ENCODE measurements at regions of chr16 and their contacts with region 1.

Region 1: GRCh38 chr16:58336332-58337089 is 41.7 kb upstream of the PRSS54 start:
- DNase-seq: peak; percentile 92
- ATAC-seq: peak; percentile 96
- H3K4me3 Mint-ChIP-seq: no peak overlapping the region
- H3K27ac Mint-ChIP-seq: no peak overlapping the region
- H3K4me1 Mint-ChIP-seq: peaks cover 8% of the 10 kb centered on the region
- H3K27me3 Mint-ChIP-seq: no peaks in the 10 kb centered on the region

Region 2: GRCh38 chr16:58325941-58326340 is 10.6 kb before region 1 on chr16:
- CTCF ChIA-PET with region 1: interaction called, 14 read pairs
- POLR2A ChIA-PET with region 1: interaction called, 3 read pairs
- DNase-seq: no peak
- ATAC-seq: no peak
- H3K4me3 Mint-ChIP-seq: no peak overlapping the region
- H3K27ac Mint-ChIP-seq: no peak overlapping the region
- H3K4me1 Mint-ChIP-seq: no peaks in the 10 kb centered on the region
- H3K27me3 Mint-ChIP-seq: peaks cover 17% of the 10 kb centered on the region

Region 3: DNA sequence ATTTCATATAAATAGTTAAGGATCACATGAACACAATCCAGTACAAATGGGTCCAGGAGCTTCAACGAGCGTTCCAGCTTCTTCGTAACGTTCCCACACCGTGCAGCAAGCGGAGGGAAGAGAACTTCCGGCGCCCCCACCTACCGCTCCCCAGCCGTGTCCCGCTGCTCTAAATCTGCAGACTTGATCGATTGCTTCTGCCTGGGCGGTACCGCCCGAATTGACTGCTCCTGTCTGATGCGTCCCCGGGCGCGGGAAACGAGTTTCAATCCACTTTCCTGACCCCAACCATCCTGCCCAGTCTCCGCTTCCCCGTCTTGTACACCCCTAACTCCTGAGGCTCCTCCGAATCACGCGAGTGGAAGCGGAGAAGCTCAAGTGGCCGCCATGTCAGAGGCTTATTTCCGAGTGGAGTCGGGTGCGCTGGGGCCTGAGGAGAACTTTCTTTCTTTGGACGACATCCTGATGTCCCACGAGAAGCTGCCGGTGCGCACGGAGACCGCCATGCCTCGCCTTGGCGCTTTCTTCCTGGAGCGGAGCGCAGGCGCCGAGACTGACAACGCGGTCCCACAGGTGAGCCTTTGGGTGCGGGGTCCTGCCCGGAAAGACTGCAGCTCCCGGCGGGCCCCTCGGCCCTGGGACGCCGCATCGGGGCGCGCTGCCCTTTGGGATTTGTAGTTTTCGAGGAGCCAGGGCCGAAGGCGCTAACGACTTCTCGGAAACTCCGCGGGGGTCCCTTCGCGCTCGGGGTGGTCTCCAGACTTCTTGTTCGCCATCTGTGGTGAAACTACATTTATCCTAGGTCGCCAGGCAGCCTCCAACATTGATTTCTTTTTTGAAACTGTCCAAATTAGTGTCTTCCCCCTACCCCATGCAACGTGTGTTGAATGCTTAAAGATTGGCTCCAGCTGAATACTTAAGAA is 56.0 kb after region 1 on chr16 and contains the start of gene GINS3:
- CTCF ChIA-PET with region 1: interaction called, 12 read pairs
- POLR2A ChIA-PET with region 1: no interaction called
- DNase-seq: peak; percentile 91
- ATAC-seq: peak; percentile 98
- H3K4me3 Mint-ChIP-seq: peak within 1 kb of the TSS; percentile 100
- H3K27ac Mint-ChIP-seq: peak within 1 kb of the TSS; percentile 100
- H3K4me1 Mint-ChIP-seq: peaks cover 34% of the 10 kb centered on the region
- H3K27me3 Mint-ChIP-seq: peaks cover 15% of the 10 kb centered on the region
- total RNA-seq, gene GINS3: 16.3 to 18.0 TPM

Region 4: GRCh38 chr16:58409316-58409973 is 72.9 kb after region 1 on chr16:
- CTCF ChIA-PET with region 1: interaction called, 13 read pairs
- POLR2A ChIA-PET with region 1: no interaction called
- DNase-seq: no peak
- ATAC-seq: no peak
- H3K4me3 Mint-ChIP-seq: no peak overlapping the region
- H3K27ac Mint-ChIP-seq: no peak overlapping the region
- H3K4me1 Mint-ChIP-seq: no peaks in the 10 kb centered on the region
- H3K27me3 Mint-ChIP-seq: peaks cover 2% of the 10 kb centered on the region

Region 5: GRCh38 chr16:58487566-58488351 is 151.2 kb after region 1 on chr16:
- CTCF ChIA-PET with region 1: interaction called, 149 read pairs
- POLR2A ChIA-PET with region 1: interaction called, 3 read pairs
- DNase-seq: peak; percentile 79
- ATAC-seq: peak; percentile 90
- H3K4me3 Mint-ChIP-seq: no peak overlapping the region
- H3K27ac Mint-ChIP-seq: no peak overlapping the region
- H3K4me1 Mint-ChIP-seq: no peaks in the 10 kb centered on the region
- H3K27me3 Mint-ChIP-seq: peaks cover 5% of the 10 kb centered on the region

Region 6: DNA sequence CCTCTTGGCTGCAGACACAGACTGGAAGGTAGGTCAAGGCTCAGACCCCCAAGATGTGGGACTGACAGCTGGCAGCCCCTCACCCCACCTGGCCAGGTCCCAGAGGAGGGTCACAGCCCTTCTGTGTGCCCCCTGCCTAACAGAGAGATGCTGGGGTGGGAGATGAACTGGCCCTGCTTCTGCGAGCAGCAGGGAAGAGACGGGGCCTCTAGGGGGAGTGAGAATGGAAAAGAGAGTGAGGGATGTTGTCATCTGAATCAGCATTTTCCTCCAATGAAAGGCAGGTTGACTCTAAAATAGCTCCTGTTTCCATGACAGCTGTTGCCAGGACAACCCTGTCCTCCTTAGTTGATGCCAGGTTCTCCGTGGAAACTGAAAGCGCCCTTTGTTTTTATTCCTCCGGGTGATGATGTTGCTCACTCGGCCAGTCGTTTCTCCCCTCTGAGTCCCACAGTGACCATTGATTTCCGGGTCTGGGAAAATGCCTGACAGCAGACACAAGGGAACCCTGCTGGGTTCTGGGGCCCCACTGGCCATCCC is 158.5 kb after region 1 on chr16:
- CTCF ChIA-PET with region 1: interaction called, 17 read pairs
- POLR2A ChIA-PET with region 1: no interaction called
- DNase-seq: peak; percentile 79
- ATAC-seq: peak; percentile 72
- H3K4me3 Mint-ChIP-seq: no peak overlapping the region
- H3K27ac Mint-ChIP-seq: no peak overlapping the region
- H3K4me1 Mint-ChIP-seq: peaks cover 9% of the 10 kb centered on the region
- H3K27me3 Mint-ChIP-seq: peaks cover 8% of the 10 kb centered on the region